ENCODE measurements at regions of chr3 and their contacts with region 1.

Region 1: DNA sequence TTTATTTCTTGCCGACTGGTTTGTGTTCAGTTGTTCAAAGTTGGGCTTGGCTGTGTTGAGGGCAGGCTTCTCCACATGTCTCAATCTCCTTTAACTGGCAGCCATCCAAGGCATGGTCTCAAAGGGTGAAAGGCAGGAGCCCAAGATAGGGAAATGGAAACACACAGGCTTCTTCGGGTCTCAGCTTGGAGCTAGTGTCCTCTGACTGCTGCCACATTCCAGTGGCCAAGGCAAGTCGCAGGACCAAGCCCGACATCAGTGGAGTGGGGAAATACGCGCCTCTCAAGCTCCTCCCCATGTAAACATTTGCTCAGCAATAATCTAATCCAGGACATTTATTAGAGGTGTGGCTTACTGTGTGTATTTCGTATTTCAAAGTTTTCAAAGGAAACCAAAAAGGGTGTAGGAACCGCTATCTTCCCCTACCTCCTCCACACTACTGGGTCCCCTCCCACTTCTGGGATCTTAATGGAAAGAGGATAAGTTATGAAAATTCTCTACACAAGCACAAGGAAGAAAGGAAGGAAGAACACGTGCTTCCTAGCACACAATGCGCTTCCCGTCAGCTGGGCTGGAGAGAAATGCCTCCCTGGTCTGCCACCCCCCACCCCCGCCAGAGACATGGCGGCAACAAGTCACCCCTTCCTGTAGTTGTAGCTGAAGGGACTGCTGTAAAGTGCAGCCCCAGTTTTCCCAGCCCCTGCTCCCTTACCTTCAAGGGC is 181.7 kb downstream of the FAM43A start:
- H3K4me3 Mint-ChIP-seq: peak overlapping the region; percentile 25
- H3K27ac Mint-ChIP-seq: peak overlapping the region; percentile 66
- H3K4me1 Mint-ChIP-seq: peaks cover 76% of the 10 kb centered on the region
- H3K27me3 Mint-ChIP-seq: peaks cover 14% of the 10 kb centered on the region

Region 2: GRCh38 chr3:194900854-194901522 is 33.6 kb after region 1 on chr3:
- intact Hi-C with region 1: loop called (anchors 5 kb)
- H3K4me3 Mint-ChIP-seq: peak overlapping the region; percentile 51
- H3K27ac Mint-ChIP-seq: peak overlapping the region; percentile 91
- H3K4me1 Mint-ChIP-seq: peaks cover 53% of the 10 kb centered on the region
- H3K27me3 Mint-ChIP-seq: peaks cover 2% of the 10 kb centered on the region

Region 3: DNA sequence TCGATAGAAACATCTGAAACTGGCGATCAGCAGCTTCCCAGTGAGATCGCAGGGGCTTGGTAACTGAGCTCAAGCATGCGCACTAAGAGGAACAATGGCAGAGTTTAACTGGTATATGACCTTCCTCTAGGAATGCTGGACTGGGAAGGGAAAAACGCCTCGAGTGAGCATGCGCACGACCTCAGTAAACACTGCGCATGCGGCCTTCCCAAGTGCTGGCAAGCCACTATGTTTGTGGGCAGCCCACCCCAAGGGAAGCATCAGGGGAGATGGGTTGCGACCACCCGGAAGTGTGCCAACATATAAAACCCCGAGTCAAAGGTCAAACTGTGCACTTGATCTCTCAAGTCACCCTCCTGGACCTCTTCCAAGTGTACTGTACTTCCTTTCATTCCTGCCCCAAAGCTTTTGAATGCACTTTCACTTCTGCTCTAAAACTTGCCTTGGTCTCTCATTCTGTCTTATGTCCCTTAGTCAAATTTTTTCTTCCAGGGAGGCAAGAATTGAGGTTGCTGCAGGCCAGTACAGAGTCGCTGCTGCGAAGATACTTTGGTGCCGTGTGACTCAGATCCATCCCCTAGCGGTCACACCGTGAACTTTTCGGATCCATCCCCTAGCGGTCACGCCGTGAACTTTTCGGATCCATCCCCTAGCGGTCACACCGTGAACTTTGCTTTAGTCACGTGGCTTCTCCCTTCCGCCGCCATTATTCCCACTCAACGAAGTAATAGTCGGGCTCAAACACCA is 61.6 kb after region 1 on chr3:
- intact Hi-C with region 1: loop called (anchors 5 kb)
- H3K4me3 Mint-ChIP-seq: peak overlapping the region; percentile 24
- H3K27ac Mint-ChIP-seq: peak overlapping the region; percentile 90
- H3K4me1 Mint-ChIP-seq: peaks cover 72% of the 10 kb centered on the region
- H3K27me3 Mint-ChIP-seq: peaks cover 3% of the 10 kb centered on the region

Measured in dendritic cell treated with granulocyte-macrophage colony-stimulating factor and Interleukin-4, amounts not matched to agents 40 ng/mL and 50 ng/mL, for 4 days (primary cell).